ENCODE measurements at regions of chr16 and their contacts with region 1.

Region 1: GRCh38 chr16:30609926-30610839 is at the start of gene ZNF689:
- DNase-seq: peak; percentile 98
- ATAC-seq: peak; percentile 92
- H3K4me3 ChIP-seq: peak within 1 kb of the TSS; percentile 80 to 96 (median 92)
- H3K27ac ChIP-seq: peak within 1 kb of the TSS; percentile 92
- H3K4me1 ChIP-seq: peaks cover 37% of the 10 kb centered on the region
- H3K27me3 ChIP-seq: no peaks in the 10 kb centered on the region; a peak in 1 of 5 replicates
- CTCF ChIP-seq: peak; percentile 21; the same call in 1 of the 2 replicates
- EP300 ChIP-seq: peak; percentile 26 to 33; a peak in 1 of 4 replicates
- POLR2A ChIP-seq: peak; percentile 84 to 96
- RAD21 ChIP-seq: no peak; the same call in 1 of the 2 replicates
- total RNA-seq, gene ZNF689: 19.5 and 22.7 TPM in 2 replicates

Region 2: GRCh38 chr16:30621765-30622164 is 11.6 kb after region 1 on chr16:
- CTCF ChIA-PET with region 1: no interaction called
- POLR2A ChIA-PET with region 1: interaction called, 46 read pairs
- in situ Hi-C with region 1: no loop called
- intact Hi-C with region 1: no loop called
- DNase-seq: no peak
- ATAC-seq: no peak
- H3K4me3 ChIP-seq: no peak overlapping the region
- H3K27ac ChIP-seq: no peak overlapping the region
- H3K4me1 ChIP-seq: peaks cover 76% of the 10 kb centered on the region
- H3K27me3 ChIP-seq: peaks cover 0 to 19% of the 10 kb centered on the region in 2 experiments; a peak in 3 of 5 replicates
- CTCF ChIP-seq: no peak
- EP300 ChIP-seq: no peak
- POLR2A ChIP-seq: no peak
- RAD21 ChIP-seq: no peak

Region 3: DNA sequence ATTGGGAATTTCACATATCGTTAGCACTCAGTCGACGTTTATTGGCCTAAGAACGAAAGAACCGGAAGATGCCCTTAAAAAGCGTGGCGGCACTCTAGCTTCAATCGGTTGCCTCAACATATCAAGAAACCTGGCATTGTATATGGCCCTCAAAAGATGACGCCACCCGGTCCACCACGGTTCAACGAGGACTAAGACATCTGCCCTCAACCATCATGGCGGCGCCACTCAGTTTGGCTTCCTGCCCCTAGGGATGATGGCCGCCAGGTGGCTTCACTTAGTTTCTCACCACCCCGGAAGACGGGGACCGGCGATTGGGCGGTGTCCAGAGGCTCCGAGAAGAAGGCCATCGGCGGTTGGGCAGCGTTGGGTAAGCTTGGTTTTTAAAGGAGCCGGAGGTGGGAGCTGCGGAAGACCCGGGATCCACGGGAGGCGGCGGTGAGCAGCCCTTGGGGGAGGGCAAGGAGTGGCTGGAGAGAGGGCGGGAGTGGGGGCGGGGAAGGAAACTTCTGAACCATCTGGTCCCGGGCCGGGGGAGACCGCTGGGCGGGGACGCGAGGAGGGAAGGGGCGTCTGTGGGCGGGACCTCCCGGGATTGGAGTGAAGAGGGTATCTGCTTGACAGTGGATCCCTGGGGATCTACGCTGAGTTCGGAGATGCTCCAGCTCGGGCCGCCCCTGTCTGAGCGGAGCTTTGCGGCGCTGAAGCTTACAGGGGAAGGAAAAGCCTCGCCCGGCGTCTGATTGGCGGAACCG is 40.4 kb after region 1 on chr16 and contains the start of gene PRR14:
- CTCF ChIA-PET with region 1: no interaction called
- POLR2A ChIA-PET with region 1: interaction called, 12 read pairs
- in situ Hi-C with region 1: no loop called
- intact Hi-C with region 1: no loop called
- DNase-seq: peak; percentile 99
- ATAC-seq: peak; percentile 87
- H3K4me3 ChIP-seq: peak within 1 kb of the TSS; percentile 79 to 100 (median 95)
- H3K27ac ChIP-seq: peak within 1 kb of the TSS; percentile 88
- H3K4me1 ChIP-seq: peaks cover 18% of the 10 kb centered on the region
- H3K27me3 ChIP-seq: no peaks in the 10 kb centered on the region; a peak in 1 of 5 replicates
- CTCF ChIP-seq: peak; percentile 49; the same call in 1 of the 2 replicates
- EP300 ChIP-seq: no peak
- POLR2A ChIP-seq: peak in 1 of 2 experiments; percentile 59; a peak in 2 of 4 replicates
- RAD21 ChIP-seq: peak; percentile 46; the same call in 1 of the 2 replicates
- total RNA-seq, gene PRR14: 9.1 and 11.0 TPM in 2 replicates

Measured in HepG2 (cell line).